Heart left ventricle (tissue), 16 donors: ENCODE measurements at regions of chr7 and their contacts with region 1.

Region 1: GRCh38 chr7:29091715-29092114 is 54.6 kb downstream of the CPVL start:
- DNase-seq: no peak
- ATAC-seq: peak in 2 of 4 donors; percentile 42 to 66
- H3K4me3 ChIP-seq: peak overlapping the region in 10 of 12 donors; percentile 18 to 52 (median 42)
- H3K27ac ChIP-seq: peak overlapping the region in 11 of 12 donors; percentile 6 to 85 (median 55)
- H3K4me1 ChIP-seq: peaks cover 0 to 49% (median 31%) of the 10 kb centered on the region in 12 donors
- H3K27me3 ChIP-seq: no peaks in the 10 kb centered on the region
- CTCF ChIP-seq: peak in 1 of 12 donors; percentile 24
- POLR2A ChIP-seq: no peak

Region 2: GRCh38 chr7:28998105-28998504 is 93.6 kb before region 1 on chr7:
- intact Hi-C with region 1: no loop called
- DNase-seq: peak in 1 of 5 donors; percentile 39
- ATAC-seq: peak; percentile 12 to 83 (median 63)
- H3K4me3 ChIP-seq: no peak overlapping the region
- H3K27ac ChIP-seq: peak overlapping the region in 8 of 12 donors; percentile 4 to 61 (median 45)
- H3K4me1 ChIP-seq: peaks cover 3 to 47% (median 24%) of the 10 kb centered on the region in 12 donors
- H3K27me3 ChIP-seq: no peaks in the 10 kb centered on the region
- CTCF ChIP-seq: no peak
- POLR2A ChIP-seq: no peak

Region 3: GRCh38 chr7:29035044-29035740 is 56.5 kb before region 1 on chr7:
- intact Hi-C with region 1: loop called in 3 of 10 experiments (anchors 5 to 10 kb)
- DNase-seq: no peak
- ATAC-seq: peak; percentile 43 to 85 (median 79)
- H3K4me3 ChIP-seq: no peak overlapping the region
- H3K27ac ChIP-seq: peak overlapping the region in 5 of 12 donors; percentile 5 to 52 (median 20)
- H3K4me1 ChIP-seq: peaks cover 0 to 49% (median 21%) of the 10 kb centered on the region in 12 donors
- H3K27me3 ChIP-seq: no peaks in the 10 kb centered on the region
- CTCF ChIP-seq: no peak
- POLR2A ChIP-seq: no peak